ENCODE measurements at regions of chr15 and their contacts with region 1.

Region 1: DNA sequence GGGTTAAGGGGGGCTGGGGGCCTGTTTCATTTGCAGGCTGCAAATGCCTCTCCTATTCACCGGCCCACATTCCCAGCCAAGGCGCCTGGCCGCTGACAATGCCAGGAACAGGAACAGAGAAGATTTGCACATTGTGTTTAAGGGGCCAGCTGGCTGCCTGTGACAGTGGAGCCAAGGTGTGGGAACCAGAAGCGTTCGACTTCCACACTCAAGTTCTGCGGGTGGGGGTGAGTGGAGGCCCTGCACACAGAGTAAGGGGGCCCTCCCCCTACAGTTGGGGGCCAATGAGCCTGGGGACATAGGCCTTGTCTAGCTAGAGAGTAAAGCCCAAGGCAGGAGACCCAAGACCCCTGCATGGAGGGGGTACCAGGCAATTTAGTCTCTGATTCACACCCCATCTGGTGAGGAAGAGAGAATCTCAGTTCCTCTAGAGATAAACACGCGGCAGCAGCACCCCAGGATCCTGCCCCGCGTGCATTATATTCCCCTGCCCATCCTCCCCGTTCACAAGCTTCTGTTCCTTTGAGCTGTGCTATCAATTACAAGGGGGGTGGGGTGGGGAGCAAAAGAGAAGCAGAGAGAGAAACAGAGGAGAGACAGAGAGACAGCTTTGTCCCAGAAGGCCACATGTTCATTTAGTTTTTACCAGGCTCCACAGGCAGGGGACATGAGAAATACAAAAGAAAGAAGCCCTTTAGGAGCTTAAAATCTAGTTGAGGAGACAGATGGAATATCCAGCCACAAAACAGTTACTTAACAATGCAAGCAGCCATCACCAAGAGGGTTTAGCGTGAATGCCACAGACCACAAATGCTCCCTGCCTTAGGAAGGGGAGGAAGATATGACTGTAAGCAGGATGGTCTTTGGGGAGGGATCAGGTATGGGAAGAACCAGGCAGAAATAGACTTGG is 9.2 kb downstream of the IGDCC3 start:
- DNase-seq: no peak
- H3K4me3 ChIP-seq: no peak overlapping the region
- H3K27ac ChIP-seq: no peak overlapping the region
- H3K4me1 ChIP-seq: no peaks in the 10 kb centered on the region
- H3K27me3 ChIP-seq: peaks cover 0 to 3% of the 10 kb centered on the region in 2 donors
- CTCF ChIP-seq: no peak
- POLR2A ChIP-seq: no peak

Region 2: DNA sequence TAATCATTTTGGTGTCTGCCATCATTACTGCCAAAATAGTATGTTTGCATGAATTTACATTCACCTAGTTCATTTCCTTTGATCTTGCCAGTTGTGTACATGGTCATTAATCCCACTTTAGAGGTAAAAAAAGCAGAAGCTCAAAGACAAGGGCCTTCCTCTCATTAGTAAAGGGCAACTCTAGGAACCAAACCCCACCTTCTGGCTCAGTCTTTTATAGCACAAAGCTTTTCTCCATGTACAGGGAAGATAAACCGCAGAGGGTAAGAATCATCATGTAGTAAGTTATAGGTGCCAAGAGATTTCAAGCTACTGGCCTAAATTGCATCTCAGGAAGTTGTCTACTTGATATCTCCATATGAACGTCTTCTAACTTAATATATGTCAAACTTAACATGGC is 359.6 kb before region 1 on chr15:
- intact Hi-C with region 1: no loop called
- DNase-seq: no peak
- H3K4me3 ChIP-seq: no peak overlapping the region
- H3K27ac ChIP-seq: no peak overlapping the region
- H3K4me1 ChIP-seq: no peaks in the 10 kb centered on the region
- H3K27me3 ChIP-seq: no peaks in the 10 kb centered on the region
- CTCF ChIP-seq: no peak
- POLR2A ChIP-seq: no peak

Region 3: GRCh38 chr15:65336493-65337455 is 31.8 kb before region 1 on chr15:
- intact Hi-C with region 1: no loop called
- DNase-seq: no peak
- H3K4me3 ChIP-seq: no peak overlapping the region
- H3K27ac ChIP-seq: no peak overlapping the region
- H3K4me1 ChIP-seq: no peaks in the 10 kb centered on the region
- H3K27me3 ChIP-seq: no peaks in the 10 kb centered on the region
- CTCF ChIP-seq: no peak
- POLR2A ChIP-seq: no peak

Region 4: DNA sequence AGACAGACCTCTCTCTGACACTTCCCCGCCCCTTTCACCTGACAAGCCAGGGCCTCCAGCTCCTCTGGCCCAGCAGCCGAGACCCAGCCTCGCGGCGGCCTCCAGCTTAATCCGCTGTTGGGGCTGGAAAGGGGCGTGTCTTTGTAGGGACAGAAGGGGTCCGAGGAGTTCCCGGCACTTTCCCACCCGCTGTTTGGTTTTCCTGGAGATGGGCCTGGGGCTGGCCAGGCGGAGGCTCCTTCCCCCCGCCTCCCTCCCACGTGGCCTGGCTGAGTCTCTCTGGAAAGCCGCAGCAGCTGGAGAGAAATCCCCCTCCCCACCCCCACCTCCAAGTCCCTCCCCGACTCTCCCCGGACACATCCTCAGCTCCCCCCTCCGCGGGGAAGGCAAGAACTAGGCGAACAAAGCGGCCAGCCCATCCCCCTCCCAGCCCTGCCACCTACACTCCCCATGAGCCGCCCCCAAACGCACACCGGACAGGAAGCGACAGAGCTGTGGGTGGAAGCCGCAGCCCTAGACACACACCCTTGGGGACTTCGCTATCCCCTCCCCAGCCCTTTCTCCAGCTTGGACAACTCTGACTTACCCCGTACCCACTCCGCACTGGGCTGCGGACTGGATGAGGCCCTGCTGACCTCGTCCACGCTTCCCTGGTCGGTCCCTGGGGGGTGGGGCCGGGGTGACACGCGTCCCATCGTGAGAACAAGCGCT is 53.0 kb after region 1 on chr15:
- intact Hi-C with region 1: no loop called
- DNase-seq: peak in 1 of 2 donors; percentile 27
- H3K4me3 ChIP-seq: peak overlapping the region; percentile 47 to 82 (median 58)
- H3K27ac ChIP-seq: peak overlapping the region in 1 of 2 donors; percentile 1
- H3K4me1 ChIP-seq: peaks cover 0 to 6% of the 10 kb centered on the region in 2 donors
- H3K27me3 ChIP-seq: no peaks in the 10 kb centered on the region
- CTCF ChIP-seq: no peak
- POLR2A ChIP-seq: no peak

Region 5: DNA sequence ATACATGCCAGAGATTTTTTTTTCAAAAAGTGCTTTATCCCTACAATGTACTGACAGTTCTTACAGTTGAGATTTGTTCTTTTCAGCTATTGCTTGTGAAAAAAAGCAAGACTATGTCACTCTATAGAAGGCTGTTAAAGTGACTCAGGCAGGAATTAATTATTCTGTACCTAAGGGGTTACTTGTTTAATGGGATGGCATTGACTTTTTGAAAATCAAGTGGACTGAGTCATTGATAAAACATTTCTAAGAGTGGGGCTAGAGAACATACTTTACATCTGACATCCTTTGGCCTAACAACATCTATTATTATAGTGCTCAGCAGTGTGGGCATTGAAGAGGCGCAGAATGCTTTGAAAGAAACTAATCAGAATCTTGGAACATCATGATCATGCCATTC is 208.1 kb after region 1 on chr15:
- intact Hi-C with region 1: loop called (anchors 10 kb)
- DNase-seq: no peak
- H3K4me3 ChIP-seq: no peak overlapping the region
- H3K27ac ChIP-seq: no peak overlapping the region
- H3K4me1 ChIP-seq: no peaks in the 10 kb centered on the region
- H3K27me3 ChIP-seq: no peaks in the 10 kb centered on the region
- CTCF ChIP-seq: no peak
- POLR2A ChIP-seq: no peak

Measured in breast epithelium (tissue), 4 donors.